Left colon (tissue), 2 donors: ENCODE measurements at regions of chr18 and their contacts with region 1.

Region 1: GRCh38 chr18:8389391-8390340 is 219.6 kb upstream of the RAB12 start:
- DNase-seq: peak; percentile 48 to 67
- ATAC-seq: peak; percentile 74

Region 2: GRCh38 chr18:7584646-7585275 is 804.9 kb before region 1 on chr18:
- intact Hi-C with region 1: loop called in 1 of 2 experiments (anchors 10 kb)
- DNase-seq: no peak
- ATAC-seq: no peak

Region 3: GRCh38 chr18:8153887-8154583 is 235.6 kb before region 1 on chr18:
- intact Hi-C with region 1: no loop called
- DNase-seq: no peak
- ATAC-seq: no peak

Region 4: GRCh38 chr18:8329186-8329771 is 60.4 kb before region 1 on chr18:
- intact Hi-C with region 1: no loop called
- DNase-seq: no peak
- ATAC-seq: peak; percentile 96